ENCODE measurements at regions of chr3 and their contacts with region 1.

Region 1: GRCh38 chr3:152471814-152472671 is 203.3 kb downstream of the MBNL1 start:
- DNase-seq: peak; percentile 44
- ATAC-seq: peak; percentile 80

Region 2: GRCh38 chr3:152071924-152072323 is 400.1 kb before region 1 on chr3:
- intact Hi-C with region 1: loop called (anchors 10 kb)
- DNase-seq: no peak
- ATAC-seq: peak; percentile 65